Testis (tissue), 5 donors: ENCODE measurements at regions of chr1 and their contacts with region 1.

Region 1: DNA sequence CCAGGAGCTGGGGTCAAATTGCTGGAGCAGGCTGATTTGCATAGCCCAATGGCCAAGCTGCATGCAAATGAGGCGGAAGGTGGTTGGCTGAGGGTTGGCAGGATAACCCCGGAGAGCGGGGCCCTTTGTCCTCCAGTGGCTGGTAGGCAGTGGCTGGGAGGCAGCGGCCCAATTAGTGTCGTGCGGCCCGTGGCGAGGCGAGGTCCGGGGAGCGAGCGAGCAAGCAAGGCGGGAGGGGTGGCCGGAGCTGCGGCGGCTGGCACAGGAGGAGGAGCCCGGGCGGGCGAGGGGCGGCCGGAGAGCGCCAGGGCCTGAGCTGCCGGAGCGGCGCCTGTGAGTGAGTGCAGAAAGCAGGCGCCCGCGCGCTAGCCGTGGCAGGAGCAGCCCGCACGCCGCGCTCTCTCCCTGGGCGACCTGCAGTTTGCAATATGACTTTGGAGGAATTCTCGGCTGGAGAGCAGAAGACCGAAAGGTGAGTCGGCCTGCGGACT is at the start of gene GADD45A:
- DNase-seq: peak; percentile 99
- H3K4me3 ChIP-seq: peak within 1 kb of the TSS; percentile 84 to 89
- H3K27ac ChIP-seq: peak within 1 kb of the TSS; percentile 85 to 86
- H3K4me1 ChIP-seq: peaks cover 10% of the 10 kb centered on the region
- H3K27me3 ChIP-seq: no peaks in the 10 kb centered on the region
- CTCF ChIP-seq: no peak
- POLR2A ChIP-seq: peak; percentile 97
- total RNA-seq, gene GADD45A: 29.8 to 47.0 TPM

Region 2: DNA sequence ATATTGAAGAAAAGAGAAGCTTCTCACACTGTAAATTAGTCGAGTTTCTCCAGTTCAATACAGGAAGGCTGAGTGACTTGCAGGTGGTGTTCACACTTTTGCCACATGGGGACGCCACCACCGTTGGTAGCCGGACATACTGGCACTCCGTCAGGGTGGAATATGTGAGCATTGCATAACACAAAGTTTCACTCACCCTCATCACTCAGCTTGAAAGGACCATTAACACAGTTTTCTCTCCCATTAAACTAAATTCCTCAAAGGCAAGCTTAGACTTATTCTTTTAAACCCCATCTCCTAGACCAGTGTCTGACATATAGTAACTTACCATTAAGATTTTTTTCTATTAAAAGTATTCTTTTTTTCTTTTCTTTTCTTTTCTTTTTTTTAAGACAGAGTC is 149.6 kb before region 1 on chr1:
- intact Hi-C with region 1: loop called (anchors 10 kb)
- DNase-seq: peak; percentile 90
- H3K4me3 ChIP-seq: no peak overlapping the region
- H3K27ac ChIP-seq: no peak overlapping the region
- H3K4me1 ChIP-seq: no peaks in the 10 kb centered on the region
- H3K27me3 ChIP-seq: no peaks in the 10 kb centered on the region
- CTCF ChIP-seq: peak; percentile 97 to 98 (median 97)
- POLR2A ChIP-seq: no peak

Region 3: GRCh38 chr1:68120136-68120791 is 435.2 kb after region 1 on chr1:
- intact Hi-C with region 1: no loop called
- DNase-seq: peak; percentile 75
- H3K4me3 ChIP-seq: no peak overlapping the region
- H3K27ac ChIP-seq: peak overlapping the region in 1 of 2 donors; percentile 14
- H3K4me1 ChIP-seq: no peaks in the 10 kb centered on the region
- H3K27me3 ChIP-seq: no peaks in the 10 kb centered on the region
- CTCF ChIP-seq: peak; percentile 84 to 94 (median 86)
- POLR2A ChIP-seq: no peak